ENCODE measurements at regions of chr21 and their contacts with region 1.

Region 1: DNA sequence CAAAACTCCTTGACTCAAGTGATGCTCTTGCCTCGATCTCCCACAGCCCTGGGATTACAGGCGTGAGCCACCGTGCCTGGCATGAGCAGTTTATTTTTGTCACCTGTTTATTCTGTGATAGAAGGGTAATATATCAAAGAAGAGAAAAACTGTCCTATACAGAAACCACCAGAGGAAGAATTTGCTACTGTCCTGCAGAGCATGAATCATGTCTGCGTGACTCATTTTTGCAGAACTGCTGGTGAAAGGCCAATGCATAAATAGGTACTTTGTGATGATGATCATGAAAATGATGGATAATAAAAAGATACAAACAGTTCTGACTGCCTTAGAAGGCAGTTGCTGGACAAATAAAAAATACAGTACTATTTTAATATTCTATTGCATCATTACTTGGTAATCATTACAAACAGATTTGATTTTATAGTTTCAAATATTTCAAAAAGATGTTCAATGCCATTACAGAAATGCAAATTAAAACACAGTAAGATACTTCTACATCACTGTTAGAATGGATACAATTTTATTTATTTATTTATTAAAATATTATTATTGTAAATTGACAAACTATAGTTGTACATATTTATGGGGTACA is 26.5 kb downstream of the RIPPLY3 start:
- DNase-seq: no peak
- H3K4me3 ChIP-seq: no peak overlapping the region
- CTCF ChIP-seq: no peak
- POLR2A ChIP-seq: no peak

Region 2: DNA sequence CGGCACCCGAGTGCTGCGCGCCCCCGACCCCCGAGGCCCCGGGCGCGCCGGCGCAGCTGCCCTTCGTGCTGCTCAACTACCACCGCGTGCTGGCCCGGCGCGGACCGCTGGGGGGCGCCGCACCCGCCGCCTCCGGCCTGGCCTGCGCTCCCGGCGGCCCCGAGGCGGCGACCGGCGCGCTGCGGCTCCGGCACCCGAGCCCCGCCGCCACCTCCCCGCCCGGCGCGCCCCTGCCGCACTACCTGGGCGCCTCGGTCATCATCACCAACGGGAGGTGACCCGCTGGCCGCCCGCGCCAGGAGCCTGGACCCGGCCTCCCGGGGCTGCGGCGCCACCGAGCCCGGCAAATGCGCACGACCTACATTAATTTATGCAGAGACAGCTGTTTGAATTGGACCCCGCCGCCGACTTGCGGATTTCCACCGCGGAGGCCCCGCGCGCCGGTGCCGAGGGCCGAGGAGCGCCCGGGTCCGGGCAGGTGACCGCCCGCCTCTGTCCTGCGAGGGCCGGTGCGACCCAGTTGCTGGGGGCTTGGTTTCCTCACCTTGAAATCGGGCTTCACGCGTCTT is 285.1 kb before region 1 on chr21:
- intact Hi-C with region 1: no loop called
- DNase-seq: no peak
- H3K4me3 ChIP-seq: no peak overlapping the region
- CTCF ChIP-seq: no peak
- POLR2A ChIP-seq: no peak

Region 3: GRCh38 chr21:36783612-36784383 is 249.2 kb before region 1 on chr21:
- intact Hi-C with region 1: no loop called
- DNase-seq: no peak
- H3K4me3 ChIP-seq: no peak overlapping the region
- CTCF ChIP-seq: no peak
- POLR2A ChIP-seq: no peak

Region 4: GRCh38 chr21:37098751-37099150 is 65.8 kb after region 1 on chr21:
- intact Hi-C with region 1: loop called (anchors 10 kb)
- DNase-seq: no peak
- H3K4me3 ChIP-seq: no peak overlapping the region
- CTCF ChIP-seq: no peak
- POLR2A ChIP-seq: no peak

Measured in lower leg skin (tissue), 4 donors.